ENCODE measurements at regions of chr7 and their contacts with region 1.

Region 1: GRCh38 chr7:47581806-47582763 is at the start of gene TNS3:
- DNase-seq: no peak
- ATAC-seq: peak; percentile 83
- H3K4me3 ChIP-seq: peak within 1 kb of the TSS; percentile 86 to 91 (median 89)
- H3K27ac ChIP-seq: peak within 1 kb of the TSS; percentile 82
- H3K4me1 ChIP-seq: peaks cover 56% of the 10 kb centered on the region
- H3K27me3 ChIP-seq: no peaks in the 10 kb centered on the region; a peak in 1 of 5 replicates
- CTCF ChIP-seq: peak; percentile 26; the same call in 1 of the 2 replicates
- EP300 ChIP-seq: no peak
- POLR2A ChIP-seq: peak; percentile 25 to 39; a peak in 2 of 4 replicates
- RAD21 ChIP-seq: peak; percentile 89
- total RNA-seq, gene TNS3: 51.3 and 55.7 TPM in 2 replicates

Region 2: DNA sequence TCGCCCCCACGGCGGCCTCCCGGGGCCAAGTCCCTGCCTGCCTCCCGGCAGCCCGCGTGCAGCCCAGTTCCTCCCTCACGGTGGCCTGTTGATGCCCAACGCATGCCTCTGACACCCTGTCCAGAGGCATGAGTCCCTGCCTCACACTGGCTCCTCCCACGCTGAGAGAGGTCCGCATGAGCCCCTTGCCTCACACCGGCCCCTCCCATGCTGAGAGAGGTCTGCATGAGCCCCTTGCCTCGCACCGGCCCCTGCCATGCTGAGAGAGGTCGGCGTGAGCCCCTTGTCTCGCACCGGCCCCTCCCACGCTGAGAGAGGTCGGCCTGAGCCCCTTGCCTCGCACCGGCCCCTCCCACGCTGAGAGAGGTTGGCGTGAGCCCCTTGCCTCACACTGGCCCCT is 1769.1 kb before region 1 on chr7:
- CTCF ChIA-PET with region 1: no interaction called
- POLR2A ChIA-PET with region 1: no interaction called
- in situ Hi-C with region 1: no loop called
- intact Hi-C with region 1: no loop called
- DNase-seq: no peak
- ATAC-seq: no peak
- H3K4me3 ChIP-seq: no peak overlapping the region
- H3K27ac ChIP-seq: no peak overlapping the region
- H3K4me1 ChIP-seq: no peaks in the 10 kb centered on the region
- H3K27me3 ChIP-seq: no peaks in the 10 kb centered on the region
- CTCF ChIP-seq: no peak
- EP300 ChIP-seq: no peak
- POLR2A ChIP-seq: no peak
- RAD21 ChIP-seq: no peak

Region 3: GRCh38 chr7:47622946-47623640 is 41.0 kb after region 1 on chr7:
- CTCF ChIA-PET with region 1: no interaction called
- POLR2A ChIA-PET with region 1: interaction called, 4 read pairs
- in situ Hi-C with region 1: no loop called
- intact Hi-C with region 1: loop called (anchors 5 kb)
- DNase-seq: peak; percentile 89
- ATAC-seq: peak; percentile 93
- H3K4me3 ChIP-seq: peak overlapping the region in 2 of 3 experiments; percentile 13 to 46; a peak in 2 of 6 replicates
- H3K27ac ChIP-seq: peak overlapping the region; percentile 71
- H3K4me1 ChIP-seq: peaks cover 64% of the 10 kb centered on the region
- H3K27me3 ChIP-seq: no peaks in the 10 kb centered on the region
- CTCF ChIP-seq: no peak
- EP300 ChIP-seq: peak in 1 of 2 experiments; percentile 58; a peak in 1 of 4 replicates
- POLR2A ChIP-seq: peak in 1 of 2 experiments; percentile 54; a peak in 2 of 4 replicates
- RAD21 ChIP-seq: no peak

Region 4: DNA sequence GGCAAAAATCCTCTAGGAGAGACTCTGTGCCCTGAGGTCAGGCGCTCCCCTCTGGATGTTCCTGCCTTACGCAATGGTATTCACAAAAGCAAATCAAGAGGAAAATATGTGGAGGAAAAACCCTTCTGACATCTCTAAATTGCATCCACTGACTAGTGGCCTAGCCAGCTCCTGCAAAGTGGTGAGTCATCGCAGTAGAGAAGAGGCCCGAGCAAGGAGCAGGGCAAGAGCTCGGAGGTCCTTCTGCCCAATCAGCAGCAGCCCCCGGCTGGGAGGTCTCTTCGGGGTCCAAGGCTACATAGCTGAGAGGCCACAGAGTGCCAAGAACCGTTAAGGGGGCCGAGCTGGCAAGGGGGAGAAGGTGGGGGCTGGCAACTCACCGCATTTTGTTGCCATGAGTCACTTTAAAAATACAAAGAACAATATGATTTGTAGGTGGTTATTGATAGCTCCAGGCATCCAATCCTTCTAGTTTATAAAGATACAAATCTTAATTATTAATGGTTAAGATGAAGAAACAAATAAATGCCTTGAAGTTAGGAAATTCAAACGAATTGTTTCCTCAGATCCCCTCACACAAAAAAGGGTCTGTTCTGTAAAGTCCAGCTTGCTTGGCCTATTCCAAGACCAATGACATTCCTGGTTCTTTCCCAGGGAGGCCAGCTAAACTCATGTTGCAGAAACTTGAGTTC is 204.6 kb after region 1 on chr7:
- CTCF ChIA-PET with region 1: no interaction called
- POLR2A ChIA-PET with region 1: interaction called, 11 read pairs
- in situ Hi-C with region 1: no loop called
- intact Hi-C with region 1: no loop called
- DNase-seq: peak; percentile 97
- ATAC-seq: peak; percentile 95
- H3K4me3 ChIP-seq: peak overlapping the region in 2 of 3 experiments; percentile 27 to 28; a peak in 4 of 6 replicates
- H3K27ac ChIP-seq: peak overlapping the region; percentile 92
- H3K4me1 ChIP-seq: peaks cover 68% of the 10 kb centered on the region
- H3K27me3 ChIP-seq: no peaks in the 10 kb centered on the region
- CTCF ChIP-seq: no peak
- EP300 ChIP-seq: peak; percentile 16 to 87; a peak in 3 of 4 replicates
- POLR2A ChIP-seq: peak in 1 of 2 experiments; percentile 49; a peak in 2 of 4 replicates
- RAD21 ChIP-seq: peak; percentile 43; the same call in 1 of the 2 replicates

Measured in HepG2 (cell line).